Left lung (tissue), 14 donors: ENCODE measurements at regions of chr18 and their contacts with region 1.

Region 1: GRCh38 chr18:10519999-10520935 is 5.6 kb upstream of the NAPG start:
- DNase-seq: peak; percentile 86 to 94 (median 88)
- ATAC-seq: peak; percentile 92
- H3K4me3 ChIP-seq: no peak overlapping the region
- H3K27ac ChIP-seq: peak overlapping the region in 1 of 2 donors; percentile 15
- H3K4me1 ChIP-seq: peaks cover 15 to 28% of the 10 kb centered on the region in 2 donors
- H3K27me3 ChIP-seq: no peaks in the 10 kb centered on the region
- CTCF ChIP-seq: peak; percentile 65 to 68

Region 2: DNA sequence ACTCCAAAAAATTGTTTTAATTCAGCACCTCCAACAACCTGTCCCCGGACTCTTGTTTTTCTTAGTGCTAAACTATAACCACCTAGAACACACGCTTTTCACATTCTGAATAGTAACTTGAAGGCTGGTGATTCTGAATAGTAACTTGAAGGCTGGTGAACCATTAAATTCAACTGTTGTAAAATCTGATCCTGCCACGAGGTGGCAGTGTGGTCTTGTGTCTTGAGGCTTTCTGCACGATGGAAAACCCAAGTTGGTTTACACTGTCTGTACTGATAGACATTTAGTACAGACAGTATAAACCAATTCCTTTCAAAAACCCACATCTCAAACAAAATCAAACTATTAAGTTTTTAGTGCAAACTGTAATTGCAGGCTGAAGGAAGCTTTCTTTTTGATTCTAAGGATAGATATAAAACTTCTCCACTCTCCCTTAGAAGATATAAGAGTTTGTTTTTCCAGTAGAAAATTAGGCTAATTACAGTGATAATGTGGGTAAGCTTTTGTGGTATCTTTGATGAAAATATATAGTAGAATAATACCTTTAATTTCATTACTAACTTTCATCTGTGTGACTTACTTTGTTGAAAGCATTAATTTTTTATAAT is 548.9 kb before region 1 on chr18:
- intact Hi-C with region 1: loop called in 1 of 2 experiments (anchors 5 kb)
- DNase-seq: peak in 3 of 4 donors; percentile 61 to 90 (median 82)
- ATAC-seq: peak; percentile 92
- H3K4me3 ChIP-seq: no peak overlapping the region
- H3K27ac ChIP-seq: no peak overlapping the region
- H3K4me1 ChIP-seq: peaks cover 0 to 28% of the 10 kb centered on the region in 2 donors
- H3K27me3 ChIP-seq: peaks cover 0 to 22% of the 10 kb centered on the region in 2 donors
- CTCF ChIP-seq: peak; percentile 69 to 71

Region 3: DNA sequence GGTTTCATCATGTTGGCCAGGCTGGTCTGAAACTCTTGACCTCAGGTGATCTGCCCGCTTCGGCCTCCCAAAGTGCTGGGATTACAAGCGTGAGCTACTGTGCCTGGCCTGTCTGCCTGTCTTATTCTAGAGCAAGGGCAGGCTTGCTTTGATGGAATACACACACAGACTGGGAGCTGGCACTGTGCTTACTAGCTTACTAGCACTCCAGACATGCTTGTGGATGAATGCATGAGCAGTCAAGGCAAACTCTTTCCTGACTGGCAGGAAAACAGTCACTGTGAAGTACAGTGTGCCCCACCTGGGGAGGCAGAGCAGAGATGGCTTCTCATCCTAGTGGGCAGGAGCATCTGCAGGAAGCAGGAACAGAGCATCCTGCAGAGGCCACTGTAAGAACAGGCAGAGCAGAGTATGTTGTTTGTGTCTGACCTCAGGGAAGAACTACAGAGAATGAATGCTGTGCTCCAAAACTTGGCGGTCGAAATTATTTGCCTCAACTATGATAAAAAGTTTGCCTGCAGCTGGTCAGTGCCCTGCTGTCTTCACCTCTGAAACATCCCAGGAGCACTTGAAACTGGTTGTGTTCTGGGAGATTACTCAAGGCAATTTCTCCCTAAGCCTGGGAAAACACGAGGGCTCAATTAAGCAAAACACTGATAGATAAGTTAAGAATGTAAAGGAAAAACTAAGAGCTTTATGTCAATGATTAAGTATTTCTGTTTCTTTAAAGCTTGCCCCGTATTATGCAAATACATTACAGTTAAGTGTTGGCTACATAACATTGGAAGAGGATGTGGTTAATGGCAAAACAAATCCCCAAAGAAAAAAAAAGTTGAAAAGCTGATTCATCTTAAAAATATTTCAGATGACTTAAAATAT is 504.1 kb before region 1 on chr18:
- intact Hi-C with region 1: loop called in 1 of 2 experiments (anchors 10 kb)
- DNase-seq: peak in 1 of 4 donors; percentile 42
- ATAC-seq: peak; percentile 57
- H3K4me3 ChIP-seq: no peak overlapping the region
- H3K27ac ChIP-seq: peak overlapping the region in 1 of 2 donors; percentile 42
- H3K4me1 ChIP-seq: peaks cover 15 to 42% of the 10 kb centered on the region in 2 donors
- H3K27me3 ChIP-seq: no peaks in the 10 kb centered on the region
- CTCF ChIP-seq: peak in 1 of 2 donors; percentile 18

Region 4: DNA sequence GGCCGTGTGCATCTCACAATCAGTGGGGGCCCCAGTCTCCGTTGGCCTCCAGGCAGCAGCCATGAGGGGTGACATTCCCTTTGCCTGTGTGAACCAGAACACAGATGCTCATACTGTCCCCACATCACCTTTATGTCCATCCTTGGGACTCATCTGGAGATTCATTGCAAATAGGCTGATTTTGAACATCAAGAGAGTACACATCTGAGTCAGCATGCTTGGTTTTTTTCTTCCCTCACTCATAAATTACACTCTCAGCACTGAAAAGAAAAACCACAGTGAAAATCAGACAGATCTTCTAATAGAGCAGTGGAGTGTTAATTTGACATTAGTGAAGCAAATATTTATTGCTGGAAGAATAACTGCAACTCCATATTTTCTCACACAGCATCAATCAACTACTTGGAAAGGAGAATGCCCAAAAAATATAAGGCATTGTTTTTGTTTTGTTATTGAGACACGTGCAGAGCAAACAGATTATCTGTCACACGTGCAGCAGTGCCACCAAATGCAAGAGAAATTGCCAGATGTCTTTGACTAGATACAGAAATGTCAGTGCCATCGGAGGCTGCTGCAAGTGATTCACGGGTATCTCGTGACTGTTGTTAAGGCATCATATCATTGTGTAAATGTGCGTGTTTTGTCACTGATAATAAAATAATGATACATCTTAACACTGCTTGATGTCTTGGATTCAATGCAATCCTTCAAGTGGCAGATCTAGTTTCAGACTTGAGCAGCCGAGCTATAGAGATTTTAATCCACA is 54.9 kb before region 1 on chr18:
- intact Hi-C with region 1: no loop called
- DNase-seq: no peak
- ATAC-seq: no peak
- H3K4me3 ChIP-seq: no peak overlapping the region
- H3K27ac ChIP-seq: no peak overlapping the region
- H3K4me1 ChIP-seq: no peaks in the 10 kb centered on the region
- H3K27me3 ChIP-seq: no peaks in the 10 kb centered on the region
- CTCF ChIP-seq: no peak